ENCODE measurements at regions of chr12 and their contacts with region 1.

Region 1: DNA sequence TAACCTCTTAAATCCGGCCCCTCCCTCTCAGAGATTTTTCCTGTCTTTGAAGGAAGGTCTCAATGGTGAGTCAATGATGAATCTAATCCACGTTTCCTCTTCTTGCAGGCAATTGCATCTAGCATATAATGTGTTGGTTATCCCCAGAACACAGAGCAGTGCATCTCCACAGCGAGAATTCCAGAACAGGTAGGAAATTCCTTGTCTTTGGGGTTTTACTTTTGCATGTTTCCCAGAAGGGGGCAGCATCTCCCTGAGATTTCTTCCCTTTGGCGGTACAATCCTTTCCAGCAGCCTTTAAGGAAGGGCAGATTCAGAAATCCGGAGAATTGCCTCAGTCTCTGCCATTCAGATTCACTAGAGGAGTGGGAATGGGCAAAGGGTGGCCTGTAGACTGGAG is 128.0 kb downstream of the KCNA5 start:
- DNase-seq: no peak

Region 2: DNA sequence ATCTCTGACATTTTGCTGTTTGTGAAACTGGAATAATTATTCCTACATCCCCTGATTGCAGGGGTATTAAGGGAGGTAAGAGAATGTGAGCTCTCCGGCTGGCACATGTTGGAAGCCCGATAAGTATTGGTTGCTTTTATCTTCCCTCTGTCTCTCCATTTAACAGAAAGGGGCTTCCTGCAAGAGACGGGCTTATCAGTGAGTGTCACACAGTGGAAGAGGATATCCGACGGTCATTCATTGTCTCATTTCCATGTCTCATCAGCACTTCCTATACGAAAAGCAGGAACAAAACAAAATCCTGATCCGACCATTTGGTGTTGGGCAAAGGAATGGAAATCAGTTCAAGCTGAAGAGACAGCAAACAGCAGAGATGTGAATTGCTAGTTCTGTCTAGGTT is 599.0 kb before region 1 on chr12:
- intact Hi-C with region 1: no loop called
- DNase-seq: no peak

Region 3: DNA sequence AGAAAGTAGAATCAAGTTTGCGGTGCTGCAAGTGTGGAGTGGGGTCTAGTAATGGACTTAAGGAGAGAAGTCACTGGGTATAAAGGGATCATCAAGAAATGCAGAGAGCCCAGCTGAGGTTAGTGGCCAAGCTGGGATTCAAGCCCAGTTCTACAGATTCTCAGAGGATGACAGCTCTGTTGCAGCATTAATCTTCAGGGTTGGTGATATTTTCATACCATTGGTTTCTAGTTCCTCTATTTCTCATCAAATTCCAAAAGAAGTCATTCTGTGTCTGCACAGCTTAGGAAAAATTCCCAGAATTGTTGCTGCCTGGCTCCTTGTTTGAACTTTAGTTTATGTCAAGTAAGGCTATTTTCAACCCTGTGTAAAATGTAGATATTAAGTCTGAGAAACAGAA is 90.7 kb after region 1 on chr12:
- intact Hi-C with region 1: no loop called
- DNase-seq: no peak

Region 4: GRCh38 chr12:5364036-5364770 is 192.5 kb after region 1 on chr12:
- intact Hi-C with region 1: no loop called
- DNase-seq: no peak

Region 5: DNA sequence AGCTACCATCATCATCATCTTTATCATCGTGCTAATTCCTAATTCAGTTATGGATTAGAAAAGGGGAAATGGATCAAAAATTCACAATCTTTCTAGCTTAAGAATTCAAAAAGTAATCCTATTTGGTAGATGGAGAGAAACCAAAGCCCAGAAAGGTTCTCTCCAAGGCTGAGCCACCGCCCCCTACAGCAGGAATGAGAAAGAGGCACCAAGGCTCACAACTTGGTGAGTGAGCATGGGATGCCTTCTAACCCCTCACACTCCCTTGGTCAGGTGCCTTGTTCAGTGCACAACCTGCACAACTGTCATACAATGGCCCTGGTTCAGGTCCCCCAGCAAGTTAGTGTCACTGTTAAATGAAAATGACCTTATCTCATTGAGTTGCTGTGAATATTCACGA is 601.8 kb after region 1 on chr12:
- intact Hi-C with region 1: loop called in 1 of 2 experiments (anchors 5 kb)
- DNase-seq: no peak

Measured in posterior vena cava (tissue), 2 donors.